ENCODE measurements at regions of chr6 and their contacts with region 1.

Region 1: GRCh38 chr6:32553037-32553742 is 23.1 kb upstream of the HLA-DRB5 start:
- DNase-seq: no peak
- ATAC-seq: no peak
- H3K4me3 ChIP-seq: no peak overlapping the region
- H3K4me3 Mint-ChIP-seq: no peak overlapping the region
- H3K27ac ChIP-seq: no peak overlapping the region
- H3K27ac Mint-ChIP-seq: no peak overlapping the region
- H3K4me1 ChIP-seq: no peaks in the 10 kb centered on the region
- H3K4me1 Mint-ChIP-seq: no peaks in the 10 kb centered on the region
- H3K27me3 ChIP-seq: no peaks in the 10 kb centered on the region
- H3K27me3 Mint-ChIP-seq: peaks cover 4% of the 10 kb centered on the region
- CTCF ChIP-seq: no peak

Region 2: GRCh38 chr6:32581315-32582095 is 28.3 kb after region 1 on chr6:
- CTCF ChIA-PET with region 1: no interaction called
- POLR2A ChIA-PET with region 1: no interaction called
- intact Hi-C with region 1: loop called in 1 of 2 experiments (anchors 2 kb)
- DNase-seq: no peak
- ATAC-seq: no peak
- H3K4me3 ChIP-seq: no peak overlapping the region
- H3K4me3 Mint-ChIP-seq: no peak overlapping the region
- H3K27ac ChIP-seq: no peak overlapping the region
- H3K27ac Mint-ChIP-seq: no peak overlapping the region
- H3K4me1 ChIP-seq: peaks cover 3% of the 10 kb centered on the region
- H3K4me1 Mint-ChIP-seq: peaks cover 18% of the 10 kb centered on the region
- H3K27me3 ChIP-seq: no peaks in the 10 kb centered on the region
- H3K27me3 Mint-ChIP-seq: no peaks in the 10 kb centered on the region
- CTCF ChIP-seq: no peak

Measured in CD4-positive, alpha-beta T cell (primary cell).